T-cell (primary cell): ENCODE measurements at regions of chr13 and their contacts with region 1.

Region 1: GRCh38 chr13:73765651-73766384 is 368.4 kb downstream of the KLF12 start:
- DNase-seq: peak; percentile 65 to 93 (median 87)
- ATAC-seq: peak; percentile 88 to 92 (median 88)
- H3K4me3 ChIP-seq: peak overlapping the region; percentile 33 to 44
- H3K4me3 Mint-ChIP-seq: peak overlapping the region; percentile 77 to 82 (median 78)
- H3K27ac ChIP-seq: peak overlapping the region; percentile 87
- H3K27ac Mint-ChIP-seq: peak overlapping the region; percentile 96
- H3K4me1 ChIP-seq: peaks cover 38 to 56% of the 10 kb centered on the region in 2 experiments
- H3K4me1 Mint-ChIP-seq: peaks cover 85 to 86% (median 86%) of the 10 kb centered on the region in 3 donors
- H3K27me3 ChIP-seq: no peaks in the 10 kb centered on the region
- H3K27me3 Mint-ChIP-seq: no peaks in the 10 kb centered on the region

Region 2: GRCh38 chr13:73216381-73216831 is 549.4 kb before region 1 on chr13:
- CTCF ChIA-PET with region 1: interaction called in 1 of 2 experiments, 10 read pairs
- POLR2A ChIA-PET with region 1: no interaction called
- DNase-seq: no peak
- ATAC-seq: no peak
- H3K4me3 ChIP-seq: no peak overlapping the region
- H3K4me3 Mint-ChIP-seq: no peak overlapping the region
- H3K27ac ChIP-seq: no peak overlapping the region
- H3K27ac Mint-ChIP-seq: no peak overlapping the region
- H3K4me1 ChIP-seq: peaks cover 0 to 6% of the 10 kb centered on the region in 2 experiments
- H3K4me1 Mint-ChIP-seq: peaks cover 11 to 19% (median 11%) of the 10 kb centered on the region in 3 donors
- H3K27me3 ChIP-seq: peaks cover 0 to 3% of the 10 kb centered on the region in 2 experiments
- H3K27me3 Mint-ChIP-seq: peaks cover 2 to 3% of the 10 kb centered on the region in 2 donors

Region 3: GRCh38 chr13:73754727-73755292 is 11.0 kb before region 1 on chr13:
- CTCF ChIA-PET with region 1: interaction called, 18 to 21 read pairs
- POLR2A ChIA-PET with region 1: interaction called in 1 of 2 experiments, 3 read pairs
- DNase-seq: peak in 10 of 35 experiments; percentile 2 to 79 (median 14)
- ATAC-seq: peak; percentile 57 to 77 (median 71)
- H3K4me3 ChIP-seq: no peak overlapping the region
- H3K4me3 Mint-ChIP-seq: peak overlapping the region in 1 of 3 donors; percentile 2
- H3K27ac ChIP-seq: no peak overlapping the region
- H3K27ac Mint-ChIP-seq: peak overlapping the region; percentile 82 to 83
- H3K4me1 ChIP-seq: peaks cover 3 to 9% of the 10 kb centered on the region in 2 experiments
- H3K4me1 Mint-ChIP-seq: peaks cover 45 to 63% (median 53%) of the 10 kb centered on the region in 3 donors
- H3K27me3 ChIP-seq: no peaks in the 10 kb centered on the region
- H3K27me3 Mint-ChIP-seq: no peaks in the 10 kb centered on the region

Region 4: GRCh38 chr13:73924607-73925006 is 158.8 kb after region 1 on chr13:
- CTCF ChIA-PET with region 1: no interaction called
- POLR2A ChIA-PET with region 1: no interaction called
- DNase-seq: no peak
- ATAC-seq: no peak
- H3K4me3 ChIP-seq: no peak overlapping the region
- H3K4me3 Mint-ChIP-seq: peak overlapping the region in 2 of 3 donors; percentile 29 to 37
- H3K27ac ChIP-seq: peak overlapping the region; percentile 4
- H3K27ac Mint-ChIP-seq: peak overlapping the region; percentile 8 to 42
- H3K4me1 ChIP-seq: peaks cover 0 to 3% of the 10 kb centered on the region in 2 experiments
- H3K4me1 Mint-ChIP-seq: peaks cover 85 to 91% (median 86%) of the 10 kb centered on the region in 3 donors
- H3K27me3 ChIP-seq: no peaks in the 10 kb centered on the region
- H3K27me3 Mint-ChIP-seq: no peaks in the 10 kb centered on the region